A549 (cell line): ENCODE measurements at regions of chr20 and their contacts with region 1.

Region 1: DNA sequence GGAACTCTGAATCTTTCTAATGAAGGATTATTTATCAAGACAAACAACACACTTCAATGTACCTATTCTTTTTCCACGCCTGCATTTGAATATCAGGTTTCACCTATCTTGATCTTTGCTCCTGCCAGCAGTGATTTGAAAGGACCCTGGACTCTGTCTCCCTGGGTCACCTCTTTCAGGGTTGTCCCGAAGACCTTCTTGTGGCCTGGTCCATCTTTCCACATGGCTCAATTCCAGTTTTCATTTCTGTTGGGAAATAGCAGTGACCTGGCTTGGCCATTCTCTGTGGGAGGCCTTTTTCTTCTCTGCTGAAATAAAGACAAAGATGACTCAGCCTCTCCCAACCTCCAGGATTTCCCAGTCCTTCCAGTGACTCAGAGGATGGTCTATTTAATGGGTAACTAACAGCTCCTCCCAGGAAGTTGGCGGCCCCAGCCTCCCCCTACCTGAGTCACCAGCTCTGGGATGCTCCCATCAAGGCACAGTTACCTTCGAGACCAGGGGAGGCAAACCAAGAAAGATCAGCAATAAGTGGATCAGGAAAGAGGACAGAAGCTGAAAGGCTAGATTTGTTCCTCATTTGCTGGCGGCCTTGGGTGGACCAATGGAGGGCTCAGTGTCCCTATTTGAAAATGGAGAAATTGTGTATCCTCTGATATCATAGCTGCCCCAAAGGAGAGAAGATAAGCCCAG is 120.2 kb upstream of the RNF24 start:
- DNase-seq: peak; percentile 98 to 100
- ATAC-seq: peak; percentile 83 to 90
- H3K4me3 ChIP-seq: peak overlapping the region; percentile 24
- H3K27ac ChIP-seq: peak overlapping the region; percentile 93
- H3K4me1 ChIP-seq: peaks cover 62% of the 10 kb centered on the region
- CTCF ChIP-seq: no peak
- EP300 ChIP-seq: peak; percentile 98 to 99
- POLR2A ChIP-seq: no peak
- RAD21 ChIP-seq: peak; percentile 34 to 71; a peak in 4 of 5 replicates

Region 2: DNA sequence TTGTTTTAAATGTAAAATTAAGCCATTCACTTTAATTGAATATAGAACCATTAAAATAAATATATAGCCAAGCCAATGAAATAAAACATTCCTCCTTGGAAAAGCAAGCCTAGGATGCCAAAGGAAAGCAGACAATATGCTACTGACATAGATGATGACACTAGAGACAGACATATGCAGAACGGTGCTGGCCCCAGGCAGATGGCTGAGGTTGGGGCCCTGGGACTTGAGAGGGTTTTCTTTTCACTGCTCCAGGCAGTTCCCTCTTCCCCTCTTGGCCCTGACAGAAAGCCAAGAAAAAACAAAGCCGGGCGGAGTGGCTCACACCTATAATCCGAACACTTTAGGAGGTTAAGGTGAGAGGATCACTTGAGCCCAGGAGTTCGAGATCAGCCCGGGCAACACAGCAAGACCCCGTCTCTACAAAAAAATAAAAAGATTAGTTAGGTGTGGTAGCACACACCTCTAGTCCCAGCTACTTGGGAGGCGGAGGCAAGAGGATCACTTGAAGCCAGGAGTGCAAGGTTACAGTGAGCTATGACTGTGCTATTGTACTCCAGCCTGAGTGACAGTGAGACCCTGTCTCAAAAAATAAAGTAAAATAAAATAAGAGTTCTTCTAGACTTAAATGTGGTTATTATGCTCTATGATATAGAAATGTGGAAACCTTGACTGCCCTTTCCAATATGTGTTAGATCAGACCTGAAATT is 1007.1 kb before region 1 on chr20:
- CTCF ChIA-PET with region 1: no interaction called
- POLR2A ChIA-PET with region 1: no interaction called
- DNase-seq: no peak
- ATAC-seq: peak in 1 of 2 experiments; percentile 33; a peak in 4 of 6 replicates
- H3K4me3 ChIP-seq: no peak overlapping the region
- H3K27ac ChIP-seq: peak overlapping the region; percentile 83 to 88; a peak in 5 of 6 replicates
- H3K4me1 ChIP-seq: peaks cover 63% of the 10 kb centered on the region
- CTCF ChIP-seq: no peak
- EP300 ChIP-seq: no peak
- POLR2A ChIP-seq: no peak
- RAD21 ChIP-seq: no peak

Region 3: GRCh38 chr20:4119854-4120209 is 15.7 kb before region 1 on chr20:
- CTCF ChIA-PET with region 1: interaction called, 63 read pairs
- POLR2A ChIA-PET with region 1: interaction called, 48 read pairs
- DNase-seq: no peak
- ATAC-seq: peak; percentile 74 to 77
- H3K4me3 ChIP-seq: peak overlapping the region; percentile 8; the same call in 1 of the 3 replicates
- H3K27ac ChIP-seq: peak overlapping the region; percentile 86 to 89
- H3K4me1 ChIP-seq: peaks cover 68% of the 10 kb centered on the region
- CTCF ChIP-seq: no peak
- EP300 ChIP-seq: no peak; a peak in 1 of 5 replicates
- POLR2A ChIP-seq: no peak
- RAD21 ChIP-seq: no peak; a peak in 1 of 5 replicates